Right lobe of liver (tissue), 6 donors: ENCODE measurements at regions of chr10 and their contacts with region 1.

Region 1: DNA sequence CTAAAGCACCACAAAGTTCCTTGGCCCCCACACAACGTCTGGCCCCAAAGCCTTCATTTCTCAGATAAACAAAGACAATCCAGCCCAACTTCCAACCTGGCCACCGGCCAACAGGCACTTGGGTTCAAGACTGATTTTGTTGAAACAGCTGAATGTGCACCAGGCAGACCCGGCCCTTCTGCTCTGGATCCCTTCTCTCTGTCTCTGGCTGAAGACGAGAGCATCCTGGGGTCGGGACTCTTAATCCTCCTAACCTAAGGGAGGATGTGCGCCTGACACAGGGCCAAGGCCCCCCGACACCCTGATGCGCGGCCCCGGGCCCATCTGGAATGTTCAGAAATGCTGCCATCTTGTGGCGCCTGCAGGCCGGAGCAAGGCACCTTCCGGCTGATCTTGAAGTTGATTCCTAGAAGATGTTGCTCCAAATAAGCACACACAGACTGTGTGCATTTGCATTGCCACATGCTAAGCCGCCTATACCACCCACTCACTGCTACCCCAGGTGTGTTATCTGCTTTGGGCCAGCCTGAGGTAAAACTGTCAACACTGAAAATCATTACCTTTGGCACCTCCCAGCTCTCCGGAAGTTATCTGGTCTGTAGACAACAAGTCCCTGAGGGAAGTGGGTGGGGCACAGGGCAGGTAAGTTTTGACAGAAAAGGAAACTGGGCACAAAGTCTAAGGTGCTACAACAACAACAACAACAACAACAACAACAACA is 98.4 kb upstream of the HABP2 start:
- DNase-seq: peak; percentile 51 to 60 (median 55)
- ATAC-seq: peak; percentile 67 to 80 (median 76)
- H3K4me3 ChIP-seq: no peak overlapping the region
- H3K27ac ChIP-seq: no peak overlapping the region
- H3K4me1 ChIP-seq: peaks cover 0 to 5% (median 0%) of the 10 kb centered on the region in 4 donors
- H3K27me3 ChIP-seq: no peaks in the 10 kb centered on the region
- CTCF ChIP-seq: peak; percentile 54 to 75 (median 70)
- POLR2A ChIP-seq: no peak

Region 2: DNA sequence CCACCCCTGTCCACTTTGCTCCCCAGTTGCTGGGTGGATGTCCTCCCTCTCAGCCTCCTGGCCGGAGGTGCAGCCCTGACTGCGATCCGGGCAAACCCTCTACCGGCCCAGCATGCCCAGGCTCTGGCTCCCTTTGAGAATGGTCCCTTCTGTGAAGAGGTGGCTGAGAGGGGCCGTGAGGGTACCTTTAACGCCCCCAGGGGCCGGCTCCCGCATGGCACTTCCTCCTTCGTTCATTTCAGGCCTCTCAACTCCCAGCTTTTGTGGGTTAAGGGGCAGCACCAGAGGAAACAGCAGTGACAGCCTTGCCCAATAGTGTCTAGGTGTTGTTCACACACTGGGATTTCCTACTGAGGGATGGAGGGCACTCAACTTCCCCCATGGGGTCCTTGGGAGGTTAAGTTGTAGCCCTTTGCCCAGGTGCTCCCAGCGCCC is 65.2 kb after region 1 on chr10:
- intact Hi-C with region 1: loop called in 1 of 2 experiments (anchors 10 kb)
- DNase-seq: no peak
- ATAC-seq: no peak
- H3K4me3 ChIP-seq: no peak overlapping the region
- H3K27ac ChIP-seq: no peak overlapping the region
- H3K4me1 ChIP-seq: no peaks in the 10 kb centered on the region
- H3K27me3 ChIP-seq: no peaks in the 10 kb centered on the region
- CTCF ChIP-seq: no peak
- POLR2A ChIP-seq: no peak

Region 3: GRCh38 chr10:114151486-114151885 is 697.0 kb after region 1 on chr10:
- intact Hi-C with region 1: no loop called
- DNase-seq: no peak
- ATAC-seq: peak in 1 of 4 donors; percentile 38
- H3K4me3 ChIP-seq: no peak overlapping the region
- H3K27ac ChIP-seq: no peak overlapping the region
- H3K4me1 ChIP-seq: no peaks in the 10 kb centered on the region
- H3K27me3 ChIP-seq: no peaks in the 10 kb centered on the region
- CTCF ChIP-seq: no peak
- POLR2A ChIP-seq: no peak